ENCODE measurements at regions of chr19 and their contacts with region 1.

Region 1: GRCh38 chr19:4342615-4343369 is 570 bp upstream of the MPND start:
- DNase-seq: peak; percentile 73 to 98 (median 97)
- ATAC-seq: peak; percentile 88
- H3K4me3 ChIP-seq: peak overlapping the region; percentile 100
- H3K4me3 Mint-ChIP-seq: peak overlapping the region; percentile 88 to 95 (median 92)
- H3K27ac ChIP-seq: peak overlapping the region; percentile 81
- H3K27ac Mint-ChIP-seq: peak overlapping the region; percentile 86 to 97 (median 94)
- H3K4me1 ChIP-seq: peaks cover 8 to 20% of the 10 kb centered on the region in 2 donors
- H3K4me1 Mint-ChIP-seq: peaks cover 20 to 46% (median 30%) of the 10 kb centered on the region in 7 donors
- H3K27me3 ChIP-seq: no peaks in the 10 kb centered on the region
- H3K27me3 Mint-ChIP-seq: peaks cover 0 to 2% (median 0%) of the 10 kb centered on the region in 5 donors

Region 2: DNA sequence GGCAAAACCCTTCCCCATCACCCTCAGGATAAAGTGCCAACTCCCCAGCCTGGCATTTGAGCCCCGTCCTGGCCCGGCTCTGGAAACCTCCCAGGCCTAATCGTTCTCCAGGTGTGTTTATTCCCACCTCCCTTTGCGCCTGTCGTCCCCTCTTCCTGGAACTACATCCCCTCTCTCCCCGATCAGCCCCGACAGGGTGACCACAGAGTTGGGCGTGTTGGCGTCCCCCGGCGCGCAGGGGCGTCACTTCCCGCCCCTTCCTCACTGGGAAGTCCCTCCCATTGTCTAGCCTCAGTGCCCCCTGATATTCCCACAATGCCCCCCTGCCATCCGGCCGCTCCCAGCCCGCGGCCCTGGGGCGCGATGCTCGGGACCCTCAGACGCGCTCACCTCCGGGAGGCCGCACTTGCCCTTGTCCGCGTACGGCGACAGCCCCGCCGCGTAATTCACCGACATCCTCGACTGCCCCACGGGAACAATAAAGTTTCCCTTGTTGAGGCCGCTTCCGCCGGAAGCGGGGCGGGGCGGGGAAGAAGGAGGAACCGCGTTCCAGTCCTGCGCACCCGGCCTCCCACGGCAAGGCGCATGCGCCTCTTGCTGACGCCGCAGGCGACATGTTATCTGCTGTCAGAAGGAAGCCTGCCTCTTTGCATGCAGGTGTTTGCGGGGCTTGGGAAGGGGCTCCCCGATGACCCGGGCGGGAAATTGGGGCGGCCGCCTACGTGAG is 160.5 kb before region 1 on chr19 and contains the starts of genes ANKRD24 and SIRT6:
- CTCF ChIA-PET with region 1: no interaction called
- POLR2A ChIA-PET with region 1: no interaction called
- intact Hi-C with region 1: loop called in 1 of 2 experiments (anchors 5 kb)
- DNase-seq: peak; percentile 91 to 97 (median 96)
- ATAC-seq: peak; percentile 90
- H3K4me3 ChIP-seq: peak within 1 kb of the TSS; percentile 90
- H3K4me3 Mint-ChIP-seq: peak within 1 kb of the TSS; percentile 92 to 99 (median 96)
- H3K27ac ChIP-seq: peak within 1 kb of the TSS; percentile 86
- H3K27ac Mint-ChIP-seq: peak within 1 kb of the TSS; percentile 92 to 98 (median 95)
- H3K4me1 ChIP-seq: peaks cover 14 to 15% of the 10 kb centered on the region in 2 donors
- H3K4me1 Mint-ChIP-seq: peaks cover 25 to 44% (median 39%) of the 10 kb centered on the region in 7 donors
- H3K27me3 ChIP-seq: no peaks in the 10 kb centered on the region
- H3K27me3 Mint-ChIP-seq: peaks cover 0 to 2% (median 0%) of the 10 kb centered on the region in 5 donors
- total RNA-seq, gene ANKRD24: 0.75 to 2.8 (median 2.4) TPM
- total RNA-seq, gene SIRT6: 20.0 to 41.2 (median 26.0) TPM

Region 3: GRCh38 chr19:4267101-4267900 is 75.5 kb before region 1 on chr19:
- CTCF ChIA-PET with region 1: interaction called, 8 read pairs
- POLR2A ChIA-PET with region 1: no interaction called
- intact Hi-C with region 1: loop called (anchors 1 to 2 kb)
- DNase-seq: peak; percentile 33 to 68 (median 48)
- ATAC-seq: peak; percentile 76
- H3K4me3 ChIP-seq: no peak overlapping the region
- H3K4me3 Mint-ChIP-seq: peak overlapping the region in 1 of 10 donors; percentile 19
- H3K27ac ChIP-seq: no peak overlapping the region
- H3K27ac Mint-ChIP-seq: peak overlapping the region in 6 of 9 donors; percentile 0 to 90 (median 60)
- H3K4me1 ChIP-seq: peaks cover 0 to 6% of the 10 kb centered on the region in 2 donors
- H3K4me1 Mint-ChIP-seq: peaks cover 18 to 29% (median 23%) of the 10 kb centered on the region in 7 donors
- H3K27me3 ChIP-seq: no peaks in the 10 kb centered on the region
- H3K27me3 Mint-ChIP-seq: no peaks in the 10 kb centered on the region

Region 4: GRCh38 chr19:4328243-4328990 is 14.4 kb before region 1 on chr19:
- CTCF ChIA-PET with region 1: interaction called, 4 read pairs
- POLR2A ChIA-PET with region 1: interaction called, 11 read pairs
- intact Hi-C with region 1: loop called (anchors 1 kb)
- DNase-seq: peak; percentile 87 to 96 (median 93)
- ATAC-seq: peak; percentile 93
- H3K4me3 ChIP-seq: peak overlapping the region; percentile 65
- H3K4me3 Mint-ChIP-seq: peak overlapping the region; percentile 83 to 90 (median 87)
- H3K27ac ChIP-seq: peak overlapping the region; percentile 52
- H3K27ac Mint-ChIP-seq: peak overlapping the region; percentile 72 to 98 (median 91)
- H3K4me1 ChIP-seq: peaks cover 11 to 14% of the 10 kb centered on the region in 2 donors
- H3K4me1 Mint-ChIP-seq: peaks cover 8 to 28% (median 24%) of the 10 kb centered on the region in 7 donors
- H3K27me3 ChIP-seq: no peaks in the 10 kb centered on the region
- H3K27me3 Mint-ChIP-seq: peaks cover 0 to 4% (median 0%) of the 10 kb centered on the region in 5 donors

Region 5: GRCh38 chr19:5680437-5681368 is 1337.9 kb after region 1 on chr19 and contains the starts of genes HSD11B1L and MICOS13:
- CTCF ChIA-PET with region 1: no interaction called
- POLR2A ChIA-PET with region 1: no interaction called
- intact Hi-C with region 1: loop called in 1 of 2 experiments (anchors 5 kb)
- DNase-seq: peak; percentile 98 to 99 (median 99)
- ATAC-seq: peak; percentile 96
- H3K4me3 ChIP-seq: peak within 1 kb of the TSS; percentile 100
- H3K4me3 Mint-ChIP-seq: peak within 1 kb of the TSS; percentile 85 to 97 (median 94)
- H3K27ac ChIP-seq: peak within 1 kb of the TSS; percentile 98
- H3K27ac Mint-ChIP-seq: peak within 1 kb of the TSS; percentile 94 to 100 (median 97)
- H3K4me1 ChIP-seq: peaks cover 8 to 18% of the 10 kb centered on the region in 2 donors
- H3K4me1 Mint-ChIP-seq: peaks cover 20 to 33% (median 25%) of the 10 kb centered on the region in 7 donors
- H3K27me3 ChIP-seq: no peaks in the 10 kb centered on the region
- H3K27me3 Mint-ChIP-seq: peaks cover 0 to 18% (median 0%) of the 10 kb centered on the region in 5 donors
- total RNA-seq, gene HSD11B1L: 2.8 to 5.2 (median 3.6) TPM
- total RNA-seq, gene MICOS13: 26.1 to 49.3 (median 38.4) TPM

Measured in naive thymus-derived CD4-positive, alpha-beta T cell (primary cell).